ENCODE measurements at regions of chrX and their contacts with region 1.

Region 1: DNA sequence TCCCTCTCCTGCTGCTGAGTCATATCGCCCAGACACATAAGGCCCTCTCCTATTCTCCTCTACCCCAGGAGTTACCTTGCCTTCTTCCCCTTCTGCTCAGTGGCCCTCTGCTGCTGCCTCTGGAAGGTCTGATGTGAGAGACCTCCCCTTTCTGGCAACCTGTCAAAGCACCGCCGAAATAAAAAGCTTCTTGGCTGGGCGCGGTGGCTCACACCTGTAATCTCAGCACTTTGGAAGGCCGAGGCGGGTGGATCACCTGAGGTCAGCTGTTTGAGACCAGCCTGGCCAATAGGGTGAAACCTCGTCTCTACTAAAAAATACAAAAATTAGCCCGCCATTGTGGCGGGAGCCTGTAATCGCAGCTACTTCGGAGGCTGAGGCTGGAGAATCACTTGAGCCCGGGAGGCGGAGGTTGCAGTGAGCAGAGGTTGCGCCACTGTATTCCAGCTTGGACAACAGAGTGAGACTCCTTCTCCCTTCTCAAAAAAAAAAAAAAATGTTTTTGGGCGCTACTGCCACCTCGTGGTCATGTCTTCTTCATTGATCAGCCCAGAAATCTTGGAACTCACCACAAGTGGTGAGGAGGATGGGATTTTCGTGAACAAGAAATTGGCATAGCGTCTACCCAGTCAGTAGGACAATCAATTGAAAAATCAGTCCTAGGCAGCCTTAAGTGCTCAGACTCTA is 8.6 kb upstream of the ZXDA start:
- DNase-seq: peak; percentile 17
- ATAC-seq: peak; percentile 42; the same call in 1 of the 2 replicates
- H3K4me3 ChIP-seq: no peak overlapping the region
- H3K27ac ChIP-seq: no peak overlapping the region
- H3K4me1 ChIP-seq: no peaks in the 10 kb centered on the region
- H3K27me3 ChIP-seq: peaks cover 9% of the 10 kb centered on the region
- CTCF ChIP-seq: peak; percentile 50
- POLR2A ChIP-seq: no peak
- RAD21 ChIP-seq: peak; percentile 40

Region 2: DNA sequence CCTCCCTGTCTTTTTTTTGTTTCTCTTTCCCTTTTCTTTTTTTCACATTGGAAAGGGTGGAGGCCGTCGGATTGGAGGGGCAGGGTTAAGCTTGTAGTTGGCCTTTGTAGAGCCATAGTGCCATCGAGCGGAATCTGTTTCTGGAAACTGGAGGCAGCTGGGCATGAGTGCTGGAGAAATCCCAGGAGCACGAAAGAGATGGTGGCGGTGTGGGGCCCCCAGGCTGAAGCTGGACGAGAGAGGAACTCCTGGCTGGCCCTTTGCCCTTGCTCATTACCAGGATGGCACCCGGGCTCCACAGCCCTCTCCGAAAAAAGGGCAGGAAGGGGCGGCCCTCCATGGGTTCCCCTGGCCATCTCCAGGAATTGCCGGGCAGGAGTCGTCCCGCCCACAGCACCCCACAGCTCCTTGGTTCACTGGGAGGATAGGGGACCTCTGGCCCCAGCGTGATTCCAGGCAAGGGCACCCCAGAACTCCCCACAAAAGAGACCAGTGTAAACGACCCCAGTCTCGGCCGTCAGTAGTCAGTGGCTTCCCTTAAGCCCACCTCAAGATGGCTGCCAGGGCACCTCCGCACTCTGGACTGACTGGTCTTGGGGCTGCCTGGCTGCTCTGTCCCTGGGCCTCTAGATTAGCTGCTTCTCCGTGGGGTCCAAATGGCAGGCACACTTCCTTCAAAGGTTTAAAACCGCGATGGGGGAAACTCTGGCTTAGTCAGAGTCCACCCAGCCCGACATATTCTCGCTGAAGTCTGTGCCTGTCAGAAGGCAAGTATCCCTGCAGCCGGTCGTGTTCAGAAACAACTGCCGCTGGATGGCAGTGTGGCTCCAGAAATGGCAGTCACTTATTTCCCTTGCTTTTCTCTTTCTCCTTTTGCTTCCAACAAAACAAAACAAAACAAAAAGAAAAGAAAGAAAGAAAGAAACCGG is 1115.7 kb before region 1 on chrX:
- CTCF ChIA-PET with region 1: no interaction called
- POLR2A ChIA-PET with region 1: no interaction called
- dilution Hi-C with region 1: no loop called
- in situ Hi-C with region 1: loop called (anchors 25 kb)
- intact Hi-C with region 1: no loop called
- DNase-seq: peak; percentile 76
- ATAC-seq: peak; percentile 91
- H3K4me3 ChIP-seq: peak overlapping the region; percentile 47
- H3K27ac ChIP-seq: no peak overlapping the region
- H3K4me1 ChIP-seq: no peaks in the 10 kb centered on the region; the same call in 1 of the 2 replicates
- H3K27me3 ChIP-seq: no peaks in the 10 kb centered on the region; the same call in 1 of the 2 replicates
- CTCF ChIP-seq: peak; percentile 74
- POLR2A ChIP-seq: no peak
- RAD21 ChIP-seq: peak; percentile 78

Region 3: GRCh38 chrX:57074465-57074864 is 844.4 kb before region 1 on chrX:
- CTCF ChIA-PET with region 1: no interaction called
- POLR2A ChIA-PET with region 1: no interaction called
- dilution Hi-C with region 1: no loop called
- in situ Hi-C with region 1: no loop called
- intact Hi-C with region 1: no loop called
- DNase-seq: no peak
- ATAC-seq: no peak
- H3K4me3 ChIP-seq: no peak overlapping the region
- H3K27ac ChIP-seq: no peak overlapping the region
- H3K4me1 ChIP-seq: no peaks in the 10 kb centered on the region
- H3K27me3 ChIP-seq: no peaks in the 10 kb centered on the region
- CTCF ChIP-seq: no peak
- POLR2A ChIP-seq: no peak
- RAD21 ChIP-seq: no peak

Region 4: DNA sequence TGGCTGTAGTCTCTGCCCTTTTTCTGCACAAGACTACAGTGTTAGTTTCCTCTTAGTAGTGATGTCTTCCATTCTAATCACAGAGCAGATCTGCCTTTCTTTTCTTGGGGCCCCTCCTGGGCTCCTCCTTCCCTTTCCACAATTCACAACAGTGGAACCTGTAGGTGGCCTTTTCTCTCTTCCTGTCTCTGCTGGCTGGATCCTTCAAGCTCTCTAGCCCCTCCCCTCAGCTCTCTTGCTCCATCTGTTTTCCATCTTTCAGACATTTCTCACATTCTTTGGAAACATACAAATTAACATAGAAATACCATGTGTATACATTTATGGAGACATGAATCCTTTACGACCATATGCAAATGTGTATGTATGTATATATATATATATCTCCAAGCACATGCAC is 781.4 kb before region 1 on chrX:
- CTCF ChIA-PET with region 1: no interaction called
- POLR2A ChIA-PET with region 1: no interaction called
- dilution Hi-C with region 1: no loop called
- in situ Hi-C with region 1: loop called (anchors 25 kb)
- intact Hi-C with region 1: no loop called
- DNase-seq: no peak
- ATAC-seq: peak; percentile 73
- H3K4me3 ChIP-seq: peak overlapping the region; percentile 21
- H3K27ac ChIP-seq: no peak overlapping the region
- H3K4me1 ChIP-seq: no peaks in the 10 kb centered on the region
- H3K27me3 ChIP-seq: no peaks in the 10 kb centered on the region
- CTCF ChIP-seq: no peak
- POLR2A ChIP-seq: no peak
- RAD21 ChIP-seq: no peak

Region 5: GRCh38 chrX:57587607-57588006 is 331.3 kb before region 1 on chrX:
- CTCF ChIA-PET with region 1: no interaction called
- POLR2A ChIA-PET with region 1: no interaction called
- dilution Hi-C with region 1: no loop called
- in situ Hi-C with region 1: loop called (anchors 10 kb)
- intact Hi-C with region 1: no loop called
- DNase-seq: no peak
- ATAC-seq: no peak
- H3K4me3 ChIP-seq: no peak overlapping the region
- H3K27ac ChIP-seq: no peak overlapping the region
- H3K4me1 ChIP-seq: peaks cover 2% of the 10 kb centered on the region; the same call in 1 of the 2 replicates
- H3K27me3 ChIP-seq: no peaks in the 10 kb centered on the region
- CTCF ChIP-seq: no peak
- POLR2A ChIP-seq: no peak
- RAD21 ChIP-seq: no peak

Region 6: DNA sequence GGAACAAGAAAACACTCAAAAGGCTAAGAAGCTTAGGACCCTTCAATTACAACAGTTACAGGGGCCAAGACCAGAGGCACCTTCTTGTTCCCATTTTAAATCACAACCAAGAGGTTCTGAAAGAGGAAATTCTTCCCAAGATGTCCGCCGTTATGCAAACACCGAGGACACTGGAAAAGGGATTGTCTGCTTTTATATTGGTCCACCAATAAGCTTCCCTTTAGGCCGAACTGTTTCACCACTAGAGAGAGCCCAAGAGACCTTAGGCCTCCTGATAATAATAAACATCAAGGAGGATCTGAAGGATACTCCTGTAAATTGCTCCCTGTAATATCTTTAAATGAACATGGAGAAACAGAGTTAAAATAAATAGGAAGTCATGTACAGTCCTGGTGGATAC is 146.3 kb before region 1 on chrX:
- CTCF ChIA-PET with region 1: no interaction called
- POLR2A ChIA-PET with region 1: no interaction called
- dilution Hi-C with region 1: no loop called
- in situ Hi-C with region 1: no loop called
- intact Hi-C with region 1: no loop called
- DNase-seq: no peak
- ATAC-seq: no peak
- H3K4me3 ChIP-seq: no peak overlapping the region
- H3K27ac ChIP-seq: no peak overlapping the region
- H3K4me1 ChIP-seq: no peaks in the 10 kb centered on the region
- H3K27me3 ChIP-seq: no peaks in the 10 kb centered on the region
- CTCF ChIP-seq: no peak
- POLR2A ChIP-seq: no peak
- RAD21 ChIP-seq: no peak

Region 7: DNA sequence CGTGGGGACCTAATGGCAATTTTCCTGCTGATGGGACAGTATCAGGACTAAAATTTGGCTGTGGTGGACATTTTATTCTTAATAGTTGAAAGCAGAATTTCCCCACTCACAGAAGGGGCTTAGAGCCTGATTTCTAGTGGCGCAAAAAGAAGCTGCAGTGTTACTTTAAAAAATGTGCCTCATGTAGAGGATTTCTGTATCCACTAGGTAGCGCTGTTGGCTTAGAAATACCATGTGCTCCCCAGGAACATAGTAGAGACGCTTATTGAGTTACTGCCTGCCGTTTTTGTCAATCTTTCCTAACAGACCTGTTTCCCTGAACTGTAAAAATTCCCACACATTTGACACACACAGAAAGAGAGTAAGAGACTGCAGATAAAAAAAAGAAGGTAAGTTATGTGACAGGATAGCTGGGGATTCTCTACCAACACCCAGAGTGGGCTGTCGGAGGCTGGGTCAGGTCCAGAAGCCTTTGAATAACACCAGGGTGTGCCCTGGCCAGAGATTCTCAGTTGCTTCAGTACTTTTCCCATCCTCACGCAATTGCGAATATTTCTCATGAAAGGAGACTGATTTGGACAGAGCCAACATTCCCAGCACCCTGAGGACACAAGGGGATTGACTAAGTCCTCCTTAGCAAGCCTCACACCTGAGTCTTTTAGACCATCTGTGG is 97.1 kb before region 1 on chrX:
- CTCF ChIA-PET with region 1: no interaction called
- POLR2A ChIA-PET with region 1: no interaction called
- dilution Hi-C with region 1: no loop called
- in situ Hi-C with region 1: no loop called
- intact Hi-C with region 1: loop called (anchors 1 kb)
- DNase-seq: peak; percentile 55
- ATAC-seq: peak; percentile 69
- H3K4me3 ChIP-seq: no peak overlapping the region
- H3K27ac ChIP-seq: no peak overlapping the region
- H3K4me1 ChIP-seq: no peaks in the 10 kb centered on the region
- H3K27me3 ChIP-seq: no peaks in the 10 kb centered on the region
- CTCF ChIP-seq: peak; percentile 71
- POLR2A ChIP-seq: no peak
- RAD21 ChIP-seq: peak; percentile 85

Region 8: GRCh38 chrX:57848857-57849256 is 70.0 kb before region 1 on chrX:
- CTCF ChIA-PET with region 1: no interaction called
- POLR2A ChIA-PET with region 1: no interaction called
- dilution Hi-C with region 1: no loop called
- in situ Hi-C with region 1: no loop called
- intact Hi-C with region 1: no loop called
- DNase-seq: no peak
- ATAC-seq: no peak
- H3K4me3 ChIP-seq: no peak overlapping the region
- H3K27ac ChIP-seq: no peak overlapping the region
- H3K4me1 ChIP-seq: no peaks in the 10 kb centered on the region
- H3K27me3 ChIP-seq: no peaks in the 10 kb centered on the region
- CTCF ChIP-seq: no peak
- POLR2A ChIP-seq: no peak
- RAD21 ChIP-seq: no peak

Region 9: GRCh38 chrX:58025979-58026378 is 107.1 kb after region 1 on chrX:
- CTCF ChIA-PET with region 1: no interaction called
- POLR2A ChIA-PET with region 1: no interaction called
- dilution Hi-C with region 1: no loop called
- in situ Hi-C with region 1: no loop called
- intact Hi-C with region 1: no loop called
- DNase-seq: peak; percentile 25
- ATAC-seq: peak; percentile 42; the same call in 1 of the 2 replicates
- H3K4me3 ChIP-seq: no peak overlapping the region
- H3K27ac ChIP-seq: no peak overlapping the region
- H3K4me1 ChIP-seq: no peaks in the 10 kb centered on the region
- H3K27me3 ChIP-seq: no peaks in the 10 kb centered on the region
- CTCF ChIP-seq: peak; percentile 44
- POLR2A ChIP-seq: no peak
- RAD21 ChIP-seq: peak; percentile 33; the same call in 1 of the 2 replicates

Measured in IMR-90 (cell line).